Activated CD4-positive, alpha-beta T cell treated with anti-CD3 and anti-CD28 coated beads for 36 hours (primary cell): ENCODE measurements at regions of chr17 and their contacts with region 1.

Region 1: GRCh38 chr17:81860756-81861518 is 602 bp upstream of the P4HB start:
- DNase-seq: peak; percentile 99
- ATAC-seq: peak; percentile 91
- H3K4me3 Mint-ChIP-seq: peak overlapping the region; percentile 99
- H3K27ac Mint-ChIP-seq: peak overlapping the region; percentile 98
- H3K4me1 Mint-ChIP-seq: peaks cover 50% of the 10 kb centered on the region
- H3K27me3 Mint-ChIP-seq: no peaks in the 10 kb centered on the region

Region 2: DNA sequence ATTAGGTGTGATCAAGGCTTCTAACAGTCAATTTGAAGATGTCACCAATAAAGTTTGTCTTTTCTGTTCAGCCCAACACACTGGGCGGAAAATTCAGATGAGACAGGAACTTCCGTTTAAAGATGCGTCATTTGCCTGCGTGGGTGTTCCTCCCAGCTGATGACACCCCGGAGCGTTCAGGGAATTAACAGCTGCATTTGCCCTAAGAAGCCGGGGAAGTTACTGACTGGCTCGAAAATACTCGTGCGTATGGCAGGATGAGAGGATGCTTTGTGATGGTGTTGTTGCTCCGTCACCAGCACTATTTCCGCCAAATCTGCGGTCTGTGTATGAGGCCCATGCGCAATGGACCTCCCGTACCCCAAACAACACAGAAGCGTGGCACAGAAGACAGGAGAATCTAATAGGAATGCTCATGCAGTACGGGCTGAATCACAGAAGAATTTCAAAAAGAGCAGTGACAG is 707.6 kb before region 1 on chr17:
- CTCF ChIA-PET with region 1: no interaction called
- POLR2A ChIA-PET with region 1: no interaction called
- intact Hi-C with region 1: no loop called
- DNase-seq: no peak
- ATAC-seq: no peak
- H3K4me3 Mint-ChIP-seq: no peak overlapping the region
- H3K27ac Mint-ChIP-seq: no peak overlapping the region
- H3K4me1 Mint-ChIP-seq: no peaks in the 10 kb centered on the region
- H3K27me3 Mint-ChIP-seq: peaks cover 3% of the 10 kb centered on the region

Region 3: GRCh38 chr17:81512560-81513371 is 348.2 kb before region 1 on chr17 and contains the start of gene ACTG1:
- CTCF ChIA-PET with region 1: no interaction called
- POLR2A ChIA-PET with region 1: no interaction called
- intact Hi-C with region 1: loop called in 1 of 2 experiments (anchors 1 kb)
- DNase-seq: peak; percentile 95
- ATAC-seq: peak; percentile 61
- H3K4me3 Mint-ChIP-seq: peak within 1 kb of the TSS; percentile 97
- H3K27ac Mint-ChIP-seq: peak within 1 kb of the TSS; percentile 89
- H3K4me1 Mint-ChIP-seq: peaks cover 21% of the 10 kb centered on the region
- H3K27me3 Mint-ChIP-seq: no peaks in the 10 kb centered on the region
- total RNA-seq, gene ACTG1: 4,119 to 5,987 TPM

Region 4: DNA sequence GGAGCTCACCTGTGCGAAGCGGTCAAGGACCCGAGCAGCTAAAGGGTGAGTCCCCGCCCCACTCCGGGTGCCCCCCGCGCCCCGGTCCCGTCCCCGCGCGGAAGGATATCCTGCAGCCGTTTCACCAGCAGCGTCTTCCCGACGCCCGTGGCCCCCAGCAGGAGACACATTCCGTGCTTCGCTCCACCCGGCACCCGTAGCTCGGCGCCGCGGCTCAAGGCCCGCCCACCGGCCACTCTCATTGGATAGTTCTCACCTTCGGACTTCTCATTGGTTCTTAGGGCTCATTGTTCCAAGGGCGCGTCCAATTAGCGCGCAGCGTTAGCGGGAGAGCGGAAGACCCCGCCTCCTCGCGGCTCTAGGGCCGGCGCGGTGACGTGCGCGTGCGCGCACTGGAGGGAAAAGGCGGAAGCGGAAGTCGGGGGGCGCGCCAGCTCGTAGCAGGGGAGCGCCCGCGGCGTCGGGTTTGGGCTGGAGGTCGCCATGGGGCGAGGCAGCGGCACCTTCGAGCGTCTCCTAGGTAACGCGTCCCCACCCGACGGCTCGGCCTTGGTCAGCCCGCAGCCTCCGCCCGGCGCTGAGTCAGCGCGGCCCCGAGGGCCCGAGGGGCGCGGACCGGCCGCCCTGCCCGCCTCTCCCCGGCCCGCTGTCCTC is 177.2 kb before region 1 on chr17 and contains the starts of genes ARL16 and HGS:
- CTCF ChIA-PET with region 1: no interaction called
- POLR2A ChIA-PET with region 1: no interaction called
- intact Hi-C with region 1: loop called in 1 of 2 experiments (anchors 1 kb)
- DNase-seq: peak; percentile 98
- ATAC-seq: peak; percentile 98
- H3K4me3 Mint-ChIP-seq: peak within 1 kb of the TSS; percentile 87
- H3K27ac Mint-ChIP-seq: peak within 1 kb of the TSS; percentile 83
- H3K4me1 Mint-ChIP-seq: peaks cover 30% of the 10 kb centered on the region
- H3K27me3 Mint-ChIP-seq: no peaks in the 10 kb centered on the region
- total RNA-seq, gene ARL16: 39.0 to 39.1 TPM
- total RNA-seq, gene HGS: 100 to 102 TPM

Region 5: GRCh38 chr17:81871387-81872230 is 10.7 kb after region 1 on chr17:
- CTCF ChIA-PET with region 1: interaction called, 6 read pairs
- POLR2A ChIA-PET with region 1: interaction called, 6 read pairs
- intact Hi-C with region 1: loop called (anchors 1 kb)
- DNase-seq: peak; percentile 98
- ATAC-seq: no peak
- H3K4me3 Mint-ChIP-seq: peak overlapping the region; percentile 81
- H3K27ac Mint-ChIP-seq: peak overlapping the region; percentile 92
- H3K4me1 Mint-ChIP-seq: peaks cover 34% of the 10 kb centered on the region
- H3K27me3 Mint-ChIP-seq: no peaks in the 10 kb centered on the region

Region 6: DNA sequence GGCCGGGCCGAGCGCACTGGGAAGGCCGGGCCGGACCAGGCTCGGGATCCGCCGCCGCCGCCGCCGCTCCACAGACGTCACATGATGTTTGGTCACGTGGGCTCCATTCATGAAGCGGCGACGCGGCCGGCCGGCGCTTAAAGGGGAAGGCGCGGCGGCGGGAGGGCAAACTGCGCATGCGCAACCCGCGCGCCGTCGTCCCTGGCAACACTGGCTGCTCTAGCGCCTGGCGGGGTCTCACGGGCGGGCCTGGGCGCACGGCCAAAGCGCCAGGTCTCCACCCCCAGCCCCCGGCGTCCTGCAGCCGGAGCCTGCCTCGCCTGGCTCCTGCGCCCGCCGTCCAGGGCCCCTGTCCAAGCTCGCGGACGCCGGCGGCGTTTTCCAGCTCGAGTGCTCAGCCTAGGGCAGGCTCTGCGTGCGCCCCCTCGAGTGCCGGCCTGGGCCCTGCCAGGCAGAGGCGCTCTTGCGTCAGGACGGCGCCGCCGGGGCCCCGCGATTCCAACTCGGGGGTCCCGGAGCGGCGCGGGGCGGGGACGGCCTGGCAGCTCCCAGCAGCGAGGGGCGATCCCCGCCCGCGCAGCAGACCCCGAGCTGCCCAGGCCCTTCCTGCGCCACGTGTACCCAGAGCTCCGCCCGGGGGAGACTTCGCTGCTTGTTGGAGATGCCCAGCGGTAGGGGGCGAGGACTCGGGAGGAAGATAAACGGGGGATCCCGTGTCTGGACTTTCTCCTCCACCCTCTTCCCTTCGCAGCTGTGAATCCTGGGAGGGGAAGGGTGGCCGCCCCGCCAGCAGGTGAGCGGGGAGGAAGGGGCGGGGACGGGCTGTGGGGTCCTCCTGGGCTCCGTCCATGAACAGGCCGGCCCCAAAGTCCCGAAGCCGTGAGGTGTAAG is 67.0 kb after region 1 on chr17 and contains the start of gene MAFG:
- CTCF ChIA-PET with region 1: no interaction called
- POLR2A ChIA-PET with region 1: no interaction called
- intact Hi-C with region 1: loop called in 1 of 2 experiments (anchors 1 kb)
- DNase-seq: peak; percentile 94
- ATAC-seq: peak; percentile 62
- H3K4me3 Mint-ChIP-seq: peak within 1 kb of the TSS; percentile 85
- H3K27ac Mint-ChIP-seq: peak within 1 kb of the TSS; percentile 85
- H3K4me1 Mint-ChIP-seq: peaks cover 32% of the 10 kb centered on the region
- H3K27me3 Mint-ChIP-seq: peaks cover 2% of the 10 kb centered on the region
- total RNA-seq, gene MAFG: 15.3 to 18.3 TPM

Region 7: DNA sequence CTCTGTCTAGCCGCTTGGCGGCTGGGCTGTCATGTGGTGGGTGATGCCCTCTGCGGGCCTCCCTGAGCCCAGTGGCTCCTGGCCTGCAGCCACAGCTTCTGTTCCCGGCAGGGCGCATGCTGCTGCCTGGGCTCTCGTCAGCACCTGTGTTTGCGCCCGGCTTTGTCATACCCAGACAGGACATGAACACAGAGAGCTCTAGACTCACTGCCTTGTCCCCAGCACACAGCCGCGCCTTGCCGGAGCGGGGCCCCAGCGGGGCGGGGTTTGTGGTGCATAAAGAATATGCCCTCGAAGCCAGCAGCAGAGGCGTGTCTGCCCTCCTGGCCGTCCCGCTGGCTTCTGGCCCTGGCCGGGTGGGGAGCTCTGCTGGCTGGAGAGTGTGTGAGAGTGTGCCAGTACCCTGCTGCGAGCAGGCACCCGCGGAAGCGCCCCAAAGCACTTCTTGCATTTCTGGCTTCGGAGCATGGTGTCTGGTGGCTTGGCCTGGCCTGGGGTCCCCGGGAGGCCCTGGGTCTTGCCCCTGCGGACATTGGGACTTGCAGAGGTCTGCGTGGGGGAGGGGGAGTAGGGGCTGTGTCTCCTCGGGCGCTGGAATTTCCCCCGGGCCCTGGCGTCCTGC is 130.9 kb after region 1 on chr17:
- CTCF ChIA-PET with region 1: no interaction called
- POLR2A ChIA-PET with region 1: no interaction called
- intact Hi-C with region 1: no loop called
- DNase-seq: no peak
- ATAC-seq: no peak
- H3K4me3 Mint-ChIP-seq: no peak overlapping the region
- H3K27ac Mint-ChIP-seq: no peak overlapping the region
- H3K4me1 Mint-ChIP-seq: no peaks in the 10 kb centered on the region
- H3K27me3 Mint-ChIP-seq: no peaks in the 10 kb centered on the region

Region 8: DNA sequence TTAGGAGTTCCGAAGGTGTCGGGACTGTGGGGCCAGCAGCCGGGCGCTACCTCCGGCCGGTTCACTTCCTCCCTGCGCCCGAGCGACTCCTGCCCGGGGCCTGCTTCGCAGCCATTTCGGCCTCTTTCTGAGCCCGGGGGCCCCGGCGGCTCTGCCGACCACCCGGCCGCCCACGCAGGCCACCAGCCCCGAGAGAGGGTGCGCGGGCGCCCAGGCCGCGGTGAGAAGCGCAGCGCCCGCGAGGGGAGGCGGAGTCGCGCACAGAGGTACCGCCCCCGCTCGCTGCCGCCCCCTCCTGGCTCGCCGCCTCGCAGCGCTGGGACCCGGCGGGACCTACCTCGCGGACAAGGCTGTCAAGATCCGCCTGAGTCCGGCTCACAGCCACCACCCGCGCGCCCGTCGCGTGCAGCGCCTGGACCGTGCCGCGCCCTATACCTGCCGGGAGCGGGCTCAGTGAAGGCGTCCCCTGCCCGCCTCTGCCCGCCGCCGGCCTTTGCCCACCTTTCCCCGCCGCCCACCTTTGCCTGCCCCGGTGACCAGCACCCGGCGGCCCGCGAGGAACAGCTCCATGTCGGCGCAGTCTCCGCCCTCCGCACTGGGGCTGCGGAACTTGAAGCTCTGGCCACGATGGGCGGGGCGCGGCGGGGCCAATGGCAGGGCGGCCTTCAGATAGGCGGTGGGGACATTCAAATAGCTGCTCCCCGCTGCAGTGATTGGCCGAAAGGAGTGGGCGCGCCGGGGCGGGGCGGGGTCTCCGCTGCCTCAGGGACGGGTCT is 176.4 kb after region 1 on chr17 and contains the start of gene DCXR:
- CTCF ChIA-PET with region 1: no interaction called
- POLR2A ChIA-PET with region 1: no interaction called
- intact Hi-C with region 1: loop called in 1 of 2 experiments (anchors 1 kb)
- DNase-seq: peak; percentile 97
- ATAC-seq: peak; percentile 97
- H3K4me3 Mint-ChIP-seq: peak within 1 kb of the TSS; percentile 82
- H3K27ac Mint-ChIP-seq: peak within 1 kb of the TSS; percentile 80
- H3K4me1 Mint-ChIP-seq: peaks cover 23% of the 10 kb centered on the region
- H3K27me3 Mint-ChIP-seq: no peaks in the 10 kb centered on the region
- total RNA-seq, gene DCXR: 105 to 166 TPM

Region 9: DNA sequence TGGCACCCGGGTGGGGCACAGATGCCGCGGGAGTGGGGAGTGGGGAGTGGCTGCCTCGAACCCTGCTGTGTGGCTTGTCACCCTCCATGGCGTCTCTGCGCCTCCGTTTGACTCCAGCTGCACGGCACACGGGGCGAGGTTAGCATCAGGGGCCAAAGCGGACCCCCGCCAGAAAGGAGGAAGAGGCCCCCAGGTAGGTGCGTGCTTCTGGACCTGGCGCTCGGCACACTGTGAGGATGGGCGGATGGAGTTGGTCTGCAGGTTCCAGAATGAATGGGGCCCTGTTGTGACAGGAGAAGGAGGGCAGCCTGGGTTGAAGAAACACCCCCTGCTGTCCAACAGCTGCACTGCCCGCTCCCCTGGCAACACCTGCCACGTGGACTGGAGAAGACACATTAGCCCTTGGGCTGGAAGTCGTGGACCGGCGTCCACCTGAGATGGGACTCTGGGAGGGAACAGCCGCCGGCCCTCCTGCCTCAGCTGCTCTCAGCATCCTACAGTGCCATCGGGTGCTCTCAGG is 246.5 kb after region 1 on chr17:
- CTCF ChIA-PET with region 1: no interaction called
- POLR2A ChIA-PET with region 1: no interaction called
- intact Hi-C with region 1: no loop called
- DNase-seq: peak; percentile 43
- ATAC-seq: no peak
- H3K4me3 Mint-ChIP-seq: peak overlapping the region; percentile 84
- H3K27ac Mint-ChIP-seq: peak overlapping the region; percentile 47
- H3K4me1 Mint-ChIP-seq: peaks cover 45% of the 10 kb centered on the region
- H3K27me3 Mint-ChIP-seq: no peaks in the 10 kb centered on the region

Region 10: DNA sequence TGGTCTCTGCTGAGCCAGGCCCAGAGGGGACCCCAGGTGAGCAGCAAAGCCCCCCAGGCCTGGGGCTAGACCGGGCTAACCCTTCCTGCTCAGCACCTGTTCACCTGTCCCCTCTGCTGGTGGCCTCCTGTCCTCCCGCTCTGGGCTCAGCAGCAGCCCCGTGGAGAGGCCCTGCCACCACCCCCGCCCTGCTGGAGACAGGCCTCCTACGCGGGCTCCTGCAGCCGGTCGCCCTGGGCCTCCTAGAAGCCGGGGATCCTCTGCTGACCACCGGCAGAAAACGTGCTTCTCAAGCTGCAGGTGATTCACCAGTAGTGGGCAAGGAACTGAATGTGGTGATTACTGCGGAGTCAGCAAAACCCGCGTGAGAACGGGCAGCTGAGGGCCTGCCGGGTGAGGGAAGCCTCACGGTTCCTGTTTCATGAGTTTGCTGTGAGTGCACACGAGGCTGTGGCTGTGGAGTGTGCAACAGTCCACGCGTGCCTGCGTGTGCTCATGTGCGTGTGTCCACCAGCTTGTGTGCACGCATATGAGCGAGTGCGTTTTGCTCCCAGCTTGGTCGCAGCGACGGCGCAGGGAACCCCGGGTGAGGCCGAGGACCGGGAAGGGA is 471.8 kb after region 1 on chr17:
- CTCF ChIA-PET with region 1: no interaction called
- POLR2A ChIA-PET with region 1: no interaction called
- intact Hi-C with region 1: no loop called
- DNase-seq: peak; percentile 57
- ATAC-seq: peak; percentile 28
- H3K4me3 Mint-ChIP-seq: peak overlapping the region; percentile 67
- H3K27ac Mint-ChIP-seq: peak overlapping the region; percentile 60
- H3K4me1 Mint-ChIP-seq: peaks cover 29% of the 10 kb centered on the region
- H3K27me3 Mint-ChIP-seq: peaks cover 4% of the 10 kb centered on the region